ENCODE measurements at regions of chr21 and their contacts with region 1.

Region 1: DNA sequence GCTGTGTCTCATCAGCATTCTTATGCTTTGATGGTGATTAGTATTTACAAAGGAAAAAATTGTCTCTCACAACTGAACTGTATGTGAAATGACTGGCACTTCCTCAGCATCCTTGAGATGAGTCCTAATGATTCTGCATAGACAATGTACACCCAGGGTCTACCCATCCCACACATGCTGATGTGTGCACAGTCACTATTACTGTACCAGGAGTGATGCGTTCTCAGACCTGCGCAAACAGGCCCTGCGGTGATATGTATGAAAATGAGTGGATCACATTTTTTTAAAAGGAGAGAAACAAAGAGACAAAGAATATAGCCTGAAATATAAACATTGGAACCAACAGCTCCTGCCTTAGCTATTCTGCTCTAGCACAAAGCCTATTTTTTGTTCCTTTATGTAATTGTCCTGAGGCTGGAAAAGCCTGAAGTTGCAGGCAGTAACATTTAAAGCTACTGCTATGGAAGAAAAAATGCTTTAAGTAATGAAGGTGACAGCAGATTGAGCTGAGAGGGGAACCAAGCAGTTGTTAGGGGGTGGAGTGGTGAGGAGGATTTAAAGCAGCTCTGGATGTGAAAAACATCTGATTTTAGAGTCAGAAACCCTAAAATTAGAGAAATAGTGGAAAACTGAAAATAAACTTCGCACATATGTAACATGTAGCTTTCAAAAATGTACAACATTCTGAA is 5.5 kb downstream of the RCAN1 start:
- DNase-seq: no peak
- ATAC-seq: no peak
- H3K4me3 ChIP-seq: no peak overlapping the region
- H3K27ac ChIP-seq: no peak overlapping the region
- H3K4me1 ChIP-seq: peaks cover 6% of the 10 kb centered on the region; the same call in 1 of the 2 replicates
- H3K27me3 ChIP-seq: no peaks in the 10 kb centered on the region
- CTCF ChIP-seq: no peak
- EP300 ChIP-seq: no peak
- POLR2A ChIP-seq: no peak
- RAD21 ChIP-seq: no peak

Region 2: GRCh38 chr21:34567604-34568385 is 41.6 kb before region 1 on chr21:
- CTCF ChIA-PET with region 1: no interaction called
- POLR2A ChIA-PET with region 1: no interaction called
- RAD21 ChIA-PET with region 1: no interaction called
- SMC1A ChIA-PET with region 1: no interaction called
- in situ Hi-C with region 1: no loop called
- intact Hi-C with region 1: no loop called
- DNase-seq: no peak
- ATAC-seq: no peak
- H3K4me3 ChIP-seq: no peak overlapping the region
- H3K27ac ChIP-seq: no peak overlapping the region
- H3K4me1 ChIP-seq: peaks cover 8% of the 10 kb centered on the region
- H3K27me3 ChIP-seq: no peaks in the 10 kb centered on the region
- CTCF ChIP-seq: no peak
- EP300 ChIP-seq: no peak
- POLR2A ChIP-seq: no peak
- RAD21 ChIP-seq: no peak

Region 3: GRCh38 chr21:34636961-34637360 is 27.6 kb after region 1 on chr21:
- CTCF ChIA-PET with region 1: interaction called, 17 read pairs
- POLR2A ChIA-PET with region 1: no interaction called
- RAD21 ChIA-PET with region 1: interaction called, 12 read pairs
- SMC1A ChIA-PET with region 1: interaction called, 24 read pairs
- in situ Hi-C with region 1: no loop called
- intact Hi-C with region 1: no loop called
- DNase-seq: no peak
- ATAC-seq: no peak
- H3K4me3 ChIP-seq: no peak overlapping the region
- H3K27ac ChIP-seq: no peak overlapping the region
- H3K4me1 ChIP-seq: peaks cover 42% of the 10 kb centered on the region
- H3K27me3 ChIP-seq: no peaks in the 10 kb centered on the region
- CTCF ChIP-seq: no peak
- EP300 ChIP-seq: no peak
- POLR2A ChIP-seq: no peak
- RAD21 ChIP-seq: no peak

Region 4: DNA sequence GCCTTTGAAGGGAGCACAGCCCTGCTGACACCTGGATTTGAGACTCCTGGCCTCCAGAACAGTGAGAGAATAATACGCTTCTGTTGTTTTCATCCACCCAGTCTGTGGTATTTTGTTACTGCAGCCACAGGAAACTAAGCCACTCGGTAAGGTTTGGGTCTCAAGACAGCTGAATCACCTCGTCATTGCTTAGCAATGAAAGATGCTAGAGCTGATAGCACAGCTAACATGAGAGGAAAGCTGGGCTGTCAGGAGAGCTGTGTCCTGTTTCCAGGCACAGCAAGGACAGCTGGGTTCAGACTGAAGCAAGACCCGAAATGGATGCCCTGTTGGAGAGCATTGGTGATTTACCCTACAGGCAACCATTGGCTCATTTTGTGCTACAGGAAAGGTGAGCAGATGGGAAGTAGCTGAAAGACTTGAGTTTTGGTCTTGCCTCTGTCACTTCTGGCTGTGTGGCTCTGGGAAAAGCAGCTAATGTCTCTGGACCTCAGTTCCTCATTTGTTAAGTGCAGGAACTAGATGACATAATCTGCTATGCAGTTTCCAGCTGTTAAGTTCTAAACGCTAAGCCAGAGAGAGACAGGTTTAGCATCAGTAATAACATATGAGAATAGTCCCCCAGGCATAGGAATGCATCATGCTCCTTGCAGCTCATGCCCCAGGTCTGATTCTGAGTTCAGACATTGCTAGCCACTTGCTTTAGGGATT is 117.4 kb after region 1 on chr21:
- CTCF ChIA-PET with region 1: no interaction called
- POLR2A ChIA-PET with region 1: no interaction called
- RAD21 ChIA-PET with region 1: no interaction called
- SMC1A ChIA-PET with region 1: no interaction called
- in situ Hi-C with region 1: no loop called
- intact Hi-C with region 1: no loop called
- DNase-seq: no peak
- ATAC-seq: no peak
- H3K4me3 ChIP-seq: no peak overlapping the region
- H3K27ac ChIP-seq: no peak overlapping the region
- H3K4me1 ChIP-seq: no peaks in the 10 kb centered on the region
- H3K27me3 ChIP-seq: no peaks in the 10 kb centered on the region
- CTCF ChIP-seq: no peak
- EP300 ChIP-seq: no peak
- POLR2A ChIP-seq: no peak
- RAD21 ChIP-seq: no peak

Region 5: DNA sequence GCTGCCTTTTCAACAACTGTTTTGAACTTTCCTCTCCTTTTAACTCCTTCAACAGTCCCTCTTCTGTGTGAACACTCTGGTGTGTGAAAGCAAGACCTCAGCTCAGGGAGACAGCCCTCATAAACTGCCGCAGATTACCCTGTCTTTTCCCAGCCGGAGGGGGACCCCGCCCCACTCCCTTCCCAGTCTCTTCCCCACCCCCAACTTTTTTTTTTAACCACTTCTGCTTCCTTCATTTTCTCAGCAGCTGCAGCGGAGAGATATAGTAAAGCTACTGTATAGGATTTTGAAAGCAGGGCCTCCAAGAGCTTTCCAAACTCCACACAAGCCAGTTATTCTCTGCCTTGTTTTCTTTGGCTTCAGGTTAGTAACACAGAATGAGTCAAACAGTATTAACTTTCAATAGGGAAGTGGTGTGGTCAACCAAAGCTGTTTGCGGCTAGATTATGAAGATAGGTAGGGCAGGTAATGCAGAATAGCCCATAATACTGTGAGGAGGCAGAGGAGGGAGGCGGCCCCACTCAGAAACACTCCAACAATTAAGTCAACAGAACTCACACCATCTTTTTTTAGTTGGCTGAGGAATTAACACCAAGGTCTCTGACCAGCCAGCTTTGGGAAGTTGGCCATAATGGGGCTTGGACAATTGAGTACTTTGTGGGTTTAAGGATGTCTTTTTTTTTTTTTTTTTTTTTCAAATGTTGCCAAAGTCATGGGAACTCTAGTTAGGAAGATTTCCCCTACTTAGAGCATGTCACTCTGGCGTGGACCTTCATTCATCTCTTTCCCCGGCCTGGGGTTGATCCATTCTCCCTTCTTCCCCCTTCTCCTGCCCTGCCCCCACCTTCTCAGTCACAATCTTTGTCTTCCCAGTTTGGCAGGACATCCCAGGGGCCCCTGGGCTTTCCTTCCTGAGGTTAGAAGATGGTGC is 236.4 kb after region 1 on chr21:
- CTCF ChIA-PET with region 1: no interaction called
- POLR2A ChIA-PET with region 1: no interaction called
- RAD21 ChIA-PET with region 1: no interaction called
- SMC1A ChIA-PET with region 1: no interaction called
- in situ Hi-C with region 1: no loop called
- intact Hi-C with region 1: no loop called
- DNase-seq: peak; percentile 60
- ATAC-seq: peak; percentile 91
- H3K4me3 ChIP-seq: no peak overlapping the region
- H3K27ac ChIP-seq: no peak overlapping the region
- H3K4me1 ChIP-seq: peaks cover 32% of the 10 kb centered on the region
- H3K27me3 ChIP-seq: no peaks in the 10 kb centered on the region
- CTCF ChIP-seq: no peak
- EP300 ChIP-seq: peak; percentile 82 to 89
- POLR2A ChIP-seq: no peak
- RAD21 ChIP-seq: no peak

Region 6: DNA sequence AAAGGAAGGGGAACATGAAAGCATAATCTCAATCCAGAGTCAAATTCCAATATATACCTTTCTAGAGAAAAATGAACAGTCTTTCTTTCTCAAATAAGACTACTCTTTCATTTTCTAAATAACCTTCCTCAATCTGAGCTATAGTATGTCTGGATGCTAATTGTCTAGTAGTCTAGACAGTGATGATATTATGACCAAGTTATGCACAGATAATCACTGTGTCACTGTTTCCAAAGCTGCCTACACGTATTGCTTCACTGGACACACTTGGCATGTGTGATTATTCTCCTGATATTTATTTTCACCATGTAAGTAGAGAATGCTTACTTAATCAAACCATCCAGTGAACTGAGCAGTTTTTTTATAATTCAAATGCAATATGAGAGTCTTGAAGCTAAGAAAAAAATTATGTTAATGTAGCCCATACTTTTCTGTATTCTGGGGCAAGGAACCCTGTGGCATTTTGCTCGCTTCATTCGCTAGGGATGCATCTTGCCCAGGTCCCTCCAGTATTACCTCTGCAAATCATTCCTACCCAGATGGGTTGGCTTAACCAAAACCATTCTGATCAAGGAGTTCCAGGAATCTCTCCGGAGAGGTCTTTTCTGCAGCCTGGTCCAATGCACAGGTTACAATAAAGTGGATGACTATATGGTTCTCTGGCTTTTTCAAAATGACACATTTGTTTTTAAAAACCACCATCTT is 742.8 kb after region 1 on chr21:
- CTCF ChIA-PET with region 1: no interaction called
- POLR2A ChIA-PET with region 1: no interaction called
- RAD21 ChIA-PET with region 1: no interaction called
- SMC1A ChIA-PET with region 1: no interaction called
- in situ Hi-C with region 1: no loop called
- intact Hi-C with region 1: no loop called
- DNase-seq: no peak
- ATAC-seq: no peak
- H3K4me3 ChIP-seq: no peak overlapping the region
- H3K27ac ChIP-seq: no peak overlapping the region
- H3K4me1 ChIP-seq: no peaks in the 10 kb centered on the region
- H3K27me3 ChIP-seq: peaks cover 0 to 3% of the 10 kb centered on the region in 2 experiments; a peak in 1 of 4 replicates
- CTCF ChIP-seq: no peak
- EP300 ChIP-seq: no peak
- POLR2A ChIP-seq: no peak
- RAD21 ChIP-seq: no peak

Measured in GM12878 (cell line).